Kidney (tissue), 22 donors: ENCODE measurements at regions of chr2 and their contacts with region 1.

Region 1: DNA sequence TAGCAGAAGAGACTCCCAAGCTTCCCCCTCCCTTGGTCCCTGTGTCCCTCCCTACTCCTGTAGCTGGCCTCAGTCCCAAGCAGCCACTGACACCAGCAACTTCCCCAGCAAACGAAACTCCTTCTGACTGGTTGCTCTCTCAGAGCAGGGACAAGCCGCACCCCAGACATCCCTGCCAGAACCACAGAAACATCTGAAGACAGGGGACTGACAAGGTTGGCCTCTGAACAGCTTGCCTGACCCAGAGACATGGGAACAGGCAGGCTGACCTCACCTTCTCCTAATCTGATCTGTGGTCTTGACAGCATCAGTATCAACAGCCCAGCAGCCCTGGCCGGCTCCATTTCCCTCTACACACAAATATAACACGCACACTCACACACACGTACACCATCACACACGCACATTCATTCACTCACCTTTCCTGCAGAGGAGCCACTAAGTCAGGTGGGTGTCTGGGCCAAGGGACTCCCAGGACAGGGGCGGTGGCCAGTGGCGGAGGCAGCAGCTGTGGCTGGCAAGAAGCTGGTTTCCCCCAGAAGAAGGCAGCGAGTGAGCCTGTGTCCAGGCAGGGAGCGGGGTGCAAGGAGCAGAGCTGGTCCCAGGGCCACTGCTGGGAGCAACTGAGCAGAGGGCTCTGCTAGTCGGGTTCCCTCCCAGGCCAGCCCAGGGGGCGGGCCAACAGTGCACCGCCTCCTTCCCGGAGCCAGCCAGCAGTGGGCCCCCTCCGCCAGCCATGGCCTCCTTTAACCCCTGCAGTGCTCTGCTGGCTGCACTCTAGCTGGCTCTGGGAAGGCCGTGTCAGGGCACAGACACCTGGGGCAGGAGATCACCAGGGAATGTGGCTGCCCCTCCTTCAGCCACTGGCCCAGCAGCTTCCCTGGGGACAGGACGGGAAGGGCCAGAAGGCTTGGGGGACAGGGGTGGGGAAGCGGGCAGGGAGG is 59.1 kb downstream of the TNS1 start:
- DNase-seq: peak; percentile 89 to 97 (median 91)
- H3K4me3 ChIP-seq: peak overlapping the region; percentile 65 to 98 (median 93)
- H3K27ac ChIP-seq: peak overlapping the region; percentile 93 to 96
- H3K4me1 ChIP-seq: peaks cover 3 to 56% (median 20%) of the 10 kb centered on the region in 3 donors
- H3K27me3 ChIP-seq: no peaks in the 10 kb centered on the region
- CTCF ChIP-seq: peak; percentile 46

Region 2: GRCh38 chr2:217899231-217900009 is 44.3 kb before region 1 on chr2:
- intact Hi-C with region 1: loop called (anchors 10 kb)
- DNase-seq: peak in 3 of 5 donors; percentile 55 to 92 (median 56)
- H3K4me3 ChIP-seq: no peak overlapping the region
- H3K27ac ChIP-seq: peak overlapping the region; percentile 68 to 71
- H3K4me1 ChIP-seq: peaks cover 6 to 77% (median 63%) of the 10 kb centered on the region in 3 donors
- H3K27me3 ChIP-seq: no peaks in the 10 kb centered on the region
- CTCF ChIP-seq: peak; percentile 79